MCF 10A (cell line): ENCODE measurements at regions of chr11 and their contacts with region 1.

Region 1: GRCh38 chr11:125568970-125569914 is at the start of gene EI24:
- DNase-seq: peak; percentile 92
- H3K4me3 Mint-ChIP-seq: peak within 1 kb of the TSS; percentile 85
- H3K27ac Mint-ChIP-seq: peak within 1 kb of the TSS; percentile 85
- H3K4me1 Mint-ChIP-seq: peaks cover 5% of the 10 kb centered on the region
- H3K27me3 Mint-ChIP-seq: no peaks in the 10 kb centered on the region
- CTCF ChIP-seq: peak; percentile 53
- total RNA-seq, gene EI24: 93.1 and 96.9 TPM in 2 replicates

Region 2: DNA sequence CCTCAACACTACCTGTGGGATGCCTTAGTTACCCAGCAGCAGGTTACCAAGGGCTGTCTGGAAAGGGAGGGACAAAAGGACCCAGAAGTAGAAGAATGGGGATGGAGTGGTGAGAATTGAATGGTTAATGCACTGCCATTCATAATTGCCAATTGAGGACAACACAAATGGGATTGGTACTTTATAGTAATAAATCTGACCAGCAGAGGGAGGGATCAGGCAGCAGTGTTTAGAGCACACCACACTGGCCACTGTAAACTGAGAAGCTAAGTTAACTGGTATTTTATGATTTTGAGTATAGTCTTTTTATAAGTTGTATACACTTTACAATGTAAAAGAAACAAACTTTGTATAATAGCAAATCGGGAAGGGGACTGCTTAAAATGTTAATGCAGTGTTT is 935.9 kb before region 1 on chr11:
- CTCF ChIA-PET with region 1: no interaction called
- POLR2A ChIA-PET with region 1: no interaction called
- intact Hi-C with region 1: no loop called
- DNase-seq: peak; percentile 13
- H3K4me3 Mint-ChIP-seq: no peak overlapping the region
- H3K27ac Mint-ChIP-seq: no peak overlapping the region
- H3K4me1 Mint-ChIP-seq: no peaks in the 10 kb centered on the region
- H3K27me3 Mint-ChIP-seq: no peaks in the 10 kb centered on the region
- CTCF ChIP-seq: no peak

Region 3: GRCh38 chr11:125257190-125257579 is 312.1 kb before region 1 on chr11:
- CTCF ChIA-PET with region 1: no interaction called
- POLR2A ChIA-PET with region 1: no interaction called
- intact Hi-C with region 1: no loop called
- DNase-seq: no peak
- H3K4me3 Mint-ChIP-seq: no peak overlapping the region
- H3K27ac Mint-ChIP-seq: no peak overlapping the region
- H3K4me1 Mint-ChIP-seq: no peaks in the 10 kb centered on the region
- H3K27me3 Mint-ChIP-seq: peaks cover 8% of the 10 kb centered on the region
- CTCF ChIP-seq: no peak

Region 4: GRCh38 chr11:125514336-125515101 is 54.7 kb before region 1 on chr11:
- CTCF ChIA-PET with region 1: no interaction called
- POLR2A ChIA-PET with region 1: interaction called, 10 read pairs
- intact Hi-C with region 1: loop called (anchors 1 kb)
- DNase-seq: peak; percentile 72
- H3K4me3 Mint-ChIP-seq: peak overlapping the region; percentile 4
- H3K27ac Mint-ChIP-seq: peak overlapping the region; percentile 76
- H3K4me1 Mint-ChIP-seq: peaks cover 11% of the 10 kb centered on the region
- H3K27me3 Mint-ChIP-seq: no peaks in the 10 kb centered on the region
- CTCF ChIP-seq: no peak

Region 5: GRCh38 chr11:125583496-125583895 is 14.3 kb after region 1 on chr11:
- CTCF ChIA-PET with region 1: interaction called, 21 read pairs
- POLR2A ChIA-PET with region 1: interaction called, 19 read pairs
- intact Hi-C with region 1: no loop called
- DNase-seq: no peak
- H3K4me3 Mint-ChIP-seq: no peak overlapping the region
- H3K27ac Mint-ChIP-seq: peak overlapping the region; percentile 66
- H3K4me1 Mint-ChIP-seq: peaks cover 4% of the 10 kb centered on the region
- H3K27me3 Mint-ChIP-seq: no peaks in the 10 kb centered on the region
- CTCF ChIP-seq: no peak

Region 6: GRCh38 chr11:125592305-125593112 is 23.3 kb after region 1 on chr11 and contains the start of gene STT3A:
- CTCF ChIA-PET with region 1: interaction called, 25 read pairs
- POLR2A ChIA-PET with region 1: interaction called, 144 read pairs
- intact Hi-C with region 1: no loop called
- DNase-seq: peak; percentile 100
- H3K4me3 Mint-ChIP-seq: peak within 1 kb of the TSS; percentile 93
- H3K27ac Mint-ChIP-seq: peak within 1 kb of the TSS; percentile 96
- H3K4me1 Mint-ChIP-seq: peaks cover 24% of the 10 kb centered on the region
- H3K27me3 Mint-ChIP-seq: no peaks in the 10 kb centered on the region
- CTCF ChIP-seq: no peak
- total RNA-seq, gene STT3A: 293 and 414 TPM in 2 replicates

Region 7: DNA sequence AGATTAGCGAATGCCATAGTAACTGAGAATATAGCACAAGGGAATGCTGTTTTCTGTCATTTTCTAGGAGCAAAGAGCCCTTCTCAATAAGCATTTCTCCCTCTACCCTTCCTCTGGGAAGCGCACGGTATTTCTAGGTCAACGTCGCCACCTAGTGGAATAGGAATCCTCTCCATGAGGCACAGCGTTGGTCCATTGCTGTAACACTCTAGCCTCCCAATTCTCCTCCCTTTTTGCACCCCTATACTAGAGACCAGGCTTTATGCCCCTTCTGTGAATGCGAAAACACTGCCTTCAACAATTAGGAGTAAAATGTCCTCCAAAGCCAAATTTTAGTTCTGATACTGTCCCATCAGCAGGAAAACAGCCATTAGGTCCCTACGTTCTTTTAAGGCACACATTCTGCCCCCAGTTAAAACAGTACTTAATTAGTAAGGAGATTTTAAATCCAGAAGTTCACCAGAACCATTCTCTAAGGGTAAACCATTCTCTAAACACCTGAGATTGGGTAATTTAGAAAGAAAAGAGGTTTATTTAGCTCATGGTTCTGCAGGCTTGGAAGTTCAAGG is 305.4 kb after region 1 on chr11:
- CTCF ChIA-PET with region 1: interaction called, 5 read pairs
- POLR2A ChIA-PET with region 1: no interaction called
- intact Hi-C with region 1: loop called (anchors 5 kb)
- DNase-seq: peak; percentile 81
- H3K4me3 Mint-ChIP-seq: no peak overlapping the region
- H3K27ac Mint-ChIP-seq: no peak overlapping the region
- H3K4me1 Mint-ChIP-seq: no peaks in the 10 kb centered on the region
- H3K27me3 Mint-ChIP-seq: no peaks in the 10 kb centered on the region
- CTCF ChIP-seq: peak; percentile 86

Region 8: DNA sequence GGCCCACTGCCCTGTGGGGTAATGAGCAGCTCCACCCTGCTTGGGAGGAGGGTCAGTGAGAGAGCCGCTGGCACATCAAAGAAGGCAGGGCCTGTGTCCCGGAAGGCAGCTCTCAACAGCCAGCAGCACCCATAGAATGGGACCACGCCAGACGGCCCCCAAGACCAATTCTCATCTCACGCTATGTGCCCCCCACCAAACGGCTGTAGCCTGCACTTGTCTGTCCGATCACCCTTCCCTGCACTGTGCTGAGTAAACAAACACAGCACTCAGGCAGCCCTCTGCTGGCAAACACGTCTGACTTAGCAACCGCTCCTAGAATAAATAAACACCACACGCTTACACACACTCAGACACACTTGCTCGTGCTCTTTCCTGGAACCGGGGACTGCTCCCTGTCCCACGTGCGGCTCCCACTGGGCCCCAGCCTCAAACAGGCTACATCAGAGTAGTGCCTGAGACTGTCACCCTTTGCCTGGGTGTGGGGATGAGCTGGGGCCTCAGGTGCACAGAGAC is 546.6 kb after region 1 on chr11:
- CTCF ChIA-PET with region 1: no interaction called
- POLR2A ChIA-PET with region 1: no interaction called
- intact Hi-C with region 1: no loop called
- DNase-seq: peak; percentile 71
- H3K4me3 Mint-ChIP-seq: no peak overlapping the region
- H3K27ac Mint-ChIP-seq: peak overlapping the region; percentile 14
- H3K4me1 Mint-ChIP-seq: peaks cover 24% of the 10 kb centered on the region
- H3K27me3 Mint-ChIP-seq: no peaks in the 10 kb centered on the region
- CTCF ChIP-seq: no peak